ENCODE measurements at regions of chr12 and their contacts with region 1.

Region 1: GRCh38 chr12:123983822-123984485 is 10.9 kb downstream of the ZNF664 start:
- DNase-seq: no peak
- ATAC-seq: peak; percentile 98
- H3K4me3 ChIP-seq: no peak overlapping the region
- H3K27ac ChIP-seq: no peak overlapping the region
- H3K4me1 ChIP-seq: peaks cover 13% of the 10 kb centered on the region
- H3K27me3 ChIP-seq: no peaks in the 10 kb centered on the region
- CTCF ChIP-seq: peak; percentile 67 to 83 (median 72)
- EP300 ChIP-seq: no peak
- POLR2A ChIP-seq: no peak
- RAD21 ChIP-seq: peak; percentile 94

Region 2: GRCh38 chr12:123633379-123634141 is 350.4 kb before region 1 on chr12 and contains the starts of genes EIF2B1 and GTF2H3:
- CTCF ChIA-PET with region 1: no interaction called
- POLR2A ChIA-PET with region 1: no interaction called
- RAD21 ChIA-PET with region 1: no interaction called
- SMC1A ChIA-PET with region 1: no interaction called
- in situ Hi-C with region 1: no loop called
- intact Hi-C with region 1: loop called (anchors 10 kb)
- DNase-seq: peak; percentile 92
- ATAC-seq: peak; percentile 98
- H3K4me3 ChIP-seq: peak within 1 kb of the TSS; percentile 97
- H3K27ac ChIP-seq: peak within 1 kb of the TSS; percentile 87
- H3K4me1 ChIP-seq: no peaks in the 10 kb centered on the region
- H3K27me3 ChIP-seq: no peaks in the 10 kb centered on the region
- CTCF ChIP-seq: no peak
- EP300 ChIP-seq: peak in 1 of 2 experiments; percentile 61; a peak in 1 of 4 replicates
- POLR2A ChIP-seq: peak; percentile 98
- RAD21 ChIP-seq: no peak; the same call in 1 of the 2 replicates
- polyA plus RNA-seq, gene EIF2B1: 17.6 to 25.9 TPM
- polyA plus RNA-seq, gene GTF2H3: 20.6 to 31.1 TPM

Region 3: GRCh38 chr12:123801573-123802178 is 182.3 kb before region 1 on chr12:
- CTCF ChIA-PET with region 1: interaction called, 11 read pairs
- POLR2A ChIA-PET with region 1: no interaction called
- RAD21 ChIA-PET with region 1: interaction called, 4 read pairs
- SMC1A ChIA-PET with region 1: interaction called, 4 read pairs
- in situ Hi-C with region 1: no loop called
- intact Hi-C with region 1: loop called (anchors 1 kb)
- DNase-seq: no peak
- ATAC-seq: peak; percentile 41; the same call in 1 of the 3 replicates
- H3K4me3 ChIP-seq: no peak overlapping the region
- H3K27ac ChIP-seq: no peak overlapping the region
- H3K4me1 ChIP-seq: no peaks in the 10 kb centered on the region
- H3K27me3 ChIP-seq: no peaks in the 10 kb centered on the region
- CTCF ChIP-seq: peak; percentile 41 to 55 (median 48); a peak in 5 of 6 replicates
- EP300 ChIP-seq: no peak
- POLR2A ChIP-seq: no peak
- RAD21 ChIP-seq: peak; percentile 78

Region 4: DNA sequence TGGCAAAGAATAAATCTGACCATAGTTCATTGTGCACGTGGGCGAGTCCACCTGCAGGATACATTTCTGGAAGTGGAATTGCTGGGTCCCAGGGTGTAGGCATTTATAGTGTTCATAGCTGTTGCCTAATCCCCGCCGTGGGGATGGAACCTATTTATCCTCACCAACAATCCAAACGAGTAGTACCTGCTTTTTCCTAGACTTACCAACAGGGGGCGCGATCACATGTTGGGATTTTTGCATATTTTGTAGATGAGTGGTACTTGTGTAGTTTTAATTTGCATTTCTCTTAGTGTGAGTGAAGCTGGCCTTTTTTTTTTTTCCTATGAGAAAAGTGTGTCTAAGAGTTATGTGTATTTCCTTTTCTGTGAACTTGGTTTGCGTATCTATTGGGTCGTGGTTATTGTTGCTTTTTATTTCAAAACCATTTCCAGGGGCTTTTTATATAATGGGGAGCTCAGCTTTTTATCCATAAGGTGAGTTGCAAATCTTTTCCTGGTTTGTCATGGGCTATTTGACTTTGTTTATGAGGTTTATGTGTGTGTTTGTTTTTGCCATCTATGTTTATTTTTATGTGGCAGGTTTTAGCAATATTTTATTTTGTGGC is 78.5 kb before region 1 on chr12:
- CTCF ChIA-PET with region 1: interaction called, 101 read pairs
- POLR2A ChIA-PET with region 1: no interaction called
- RAD21 ChIA-PET with region 1: interaction called, 10 read pairs
- SMC1A ChIA-PET with region 1: interaction called, 43 read pairs
- in situ Hi-C with region 1: no loop called
- intact Hi-C with region 1: loop called (anchors 1 kb)
- DNase-seq: peak; percentile 9
- ATAC-seq: peak; percentile 76
- H3K4me3 ChIP-seq: no peak overlapping the region
- H3K27ac ChIP-seq: no peak overlapping the region
- H3K4me1 ChIP-seq: no peaks in the 10 kb centered on the region
- H3K27me3 ChIP-seq: no peaks in the 10 kb centered on the region; a peak in 1 of 4 replicates
- CTCF ChIP-seq: peak; percentile 72 to 77 (median 74)
- EP300 ChIP-seq: no peak
- POLR2A ChIP-seq: no peak
- RAD21 ChIP-seq: peak; percentile 62

Region 5: GRCh38 chr12:123973552-123974341 is 10.2 kb before region 1 on chr12:
- CTCF ChIA-PET with region 1: interaction called, 10 read pairs
- POLR2A ChIA-PET with region 1: interaction called, 6 read pairs
- RAD21 ChIA-PET with region 1: interaction called, 3 read pairs
- SMC1A ChIA-PET with region 1: interaction called, 5 read pairs
- in situ Hi-C with region 1: no loop called
- intact Hi-C with region 1: no loop called
- DNase-seq: no peak
- ATAC-seq: peak; percentile 41
- H3K4me3 ChIP-seq: peak overlapping the region; percentile 76
- H3K27ac ChIP-seq: peak overlapping the region; percentile 61
- H3K4me1 ChIP-seq: no peaks in the 10 kb centered on the region; the same call in 1 of the 2 replicates
- H3K27me3 ChIP-seq: no peaks in the 10 kb centered on the region
- CTCF ChIP-seq: no peak
- EP300 ChIP-seq: no peak
- POLR2A ChIP-seq: no peak; the same call in 1 of the 2 replicates
- RAD21 ChIP-seq: no peak

Region 6: GRCh38 chr12:123995023-123995748 is 11.2 kb after region 1 on chr12:
- CTCF ChIA-PET with region 1: interaction called, 18 read pairs
- POLR2A ChIA-PET with region 1: no interaction called
- RAD21 ChIA-PET with region 1: no interaction called
- SMC1A ChIA-PET with region 1: interaction called, 11 read pairs
- in situ Hi-C with region 1: no loop called
- intact Hi-C with region 1: no loop called
- DNase-seq: no peak
- ATAC-seq: no peak; the same call in 2 of the 3 replicates
- H3K4me3 ChIP-seq: no peak overlapping the region
- H3K27ac ChIP-seq: no peak overlapping the region
- H3K4me1 ChIP-seq: no peaks in the 10 kb centered on the region
- H3K27me3 ChIP-seq: no peaks in the 10 kb centered on the region
- CTCF ChIP-seq: no peak
- EP300 ChIP-seq: no peak
- POLR2A ChIP-seq: no peak
- RAD21 ChIP-seq: no peak

Region 7: GRCh38 chr12:124036674-124037109 is 52.7 kb after region 1 on chr12:
- CTCF ChIA-PET with region 1: interaction called, 12 read pairs
- POLR2A ChIA-PET with region 1: no interaction called
- RAD21 ChIA-PET with region 1: no interaction called
- SMC1A ChIA-PET with region 1: interaction called, 5 read pairs
- in situ Hi-C with region 1: no loop called
- intact Hi-C with region 1: no loop called
- DNase-seq: peak; percentile 27
- ATAC-seq: peak; percentile 80
- H3K4me3 ChIP-seq: no peak overlapping the region
- H3K27ac ChIP-seq: no peak overlapping the region
- H3K4me1 ChIP-seq: no peaks in the 10 kb centered on the region
- H3K27me3 ChIP-seq: no peaks in the 10 kb centered on the region
- CTCF ChIP-seq: peak; percentile 80 to 89 (median 84)
- EP300 ChIP-seq: no peak
- POLR2A ChIP-seq: no peak
- RAD21 ChIP-seq: peak; percentile 92

Measured in GM12878 (cell line).